Spleen (tissue), 13 donors: ENCODE measurements at regions of chr3 and their contacts with region 1.

Region 1: DNA sequence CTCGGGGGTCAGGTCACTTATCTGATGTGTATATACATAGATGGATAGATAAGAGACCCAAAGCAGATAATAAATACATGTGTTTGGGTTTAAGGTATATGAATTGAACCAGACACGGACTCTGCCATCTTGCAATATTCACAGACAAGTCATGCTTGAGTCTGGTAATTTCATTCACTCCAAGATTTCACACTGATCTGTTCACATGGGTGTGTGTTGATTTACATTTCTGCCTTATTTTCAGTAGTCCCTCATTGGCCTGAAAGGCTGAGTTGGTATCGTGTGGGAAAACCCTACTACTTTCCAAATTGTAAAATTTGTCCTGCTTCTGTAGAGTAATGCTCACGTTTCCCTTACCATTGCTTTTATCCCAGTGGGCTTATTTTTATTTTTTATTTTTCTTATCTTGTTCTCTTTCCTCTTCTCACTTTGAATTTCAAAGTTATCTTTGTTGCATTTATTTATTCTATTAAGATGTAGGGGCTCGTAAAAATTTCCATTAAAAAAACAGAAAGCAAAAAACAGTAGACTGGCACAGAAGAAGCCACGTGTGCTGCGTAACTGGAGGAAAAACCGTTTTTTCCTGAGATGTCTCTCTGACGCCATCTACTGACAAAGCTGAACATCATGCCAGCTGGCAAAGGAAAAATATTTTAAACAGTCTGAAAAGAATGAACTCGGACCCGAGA is 10.8 kb upstream of the MFSD1 start:
- DNase-seq: no peak
- H3K4me3 ChIP-seq: peak overlapping the region in 1 of 8 donors; percentile 27
- H3K27ac ChIP-seq: no peak overlapping the region
- H3K4me1 ChIP-seq: peaks cover 0 to 12% (median 8%) of the 10 kb centered on the region in 6 donors
- H3K27me3 ChIP-seq: no peaks in the 10 kb centered on the region
- CTCF ChIP-seq: peak; percentile 26 to 78 (median 71)
- POLR2A ChIP-seq: no peak

Region 2: GRCh38 chr3:157618075-157618760 is 1172.8 kb before region 1 on chr3:
- intact Hi-C with region 1: loop called (anchors 10 kb)
- DNase-seq: no peak
- H3K4me3 ChIP-seq: no peak overlapping the region
- H3K27ac ChIP-seq: no peak overlapping the region
- H3K4me1 ChIP-seq: peaks cover 0 to 9% (median 6%) of the 10 kb centered on the region in 6 donors
- H3K27me3 ChIP-seq: peaks cover 0 to 18% (median 0%) of the 10 kb centered on the region in 7 donors
- CTCF ChIP-seq: peak; percentile 23 to 77 (median 66)
- POLR2A ChIP-seq: no peak

Region 3: GRCh38 chr3:158659454-158660237 is 131.4 kb before region 1 on chr3:
- intact Hi-C with region 1: loop called (anchors 5 kb)
- DNase-seq: no peak
- H3K4me3 ChIP-seq: no peak overlapping the region
- H3K27ac ChIP-seq: no peak overlapping the region
- H3K4me1 ChIP-seq: peaks cover 0 to 13% (median 0%) of the 10 kb centered on the region in 6 donors
- H3K27me3 ChIP-seq: no peaks in the 10 kb centered on the region
- CTCF ChIP-seq: peak in 10 of 11 experiments; percentile 12 to 76 (median 64)
- POLR2A ChIP-seq: no peak

Region 4: GRCh38 chr3:158727206-158728060 is 63.6 kb before region 1 on chr3:
- intact Hi-C with region 1: loop called (anchors 5 kb)
- DNase-seq: no peak
- H3K4me3 ChIP-seq: peak overlapping the region in 1 of 8 donors; percentile 35
- H3K27ac ChIP-seq: peak overlapping the region in 5 of 8 donors; percentile 3 to 87 (median 16)
- H3K4me1 ChIP-seq: peaks cover 12 to 54% (median 39%) of the 10 kb centered on the region in 6 donors
- H3K27me3 ChIP-seq: peaks cover 0 to 11% (median 0%) of the 10 kb centered on the region in 7 donors
- CTCF ChIP-seq: peak; percentile 73 to 96 (median 88)
- POLR2A ChIP-seq: no peak